OCI-LY7 (cell line): ENCODE measurements at regions of chr13 and their contacts with region 1.

Region 1: GRCh38 chr13:63540061-63540460 is 2124.4 kb upstream of the PCDH20 start:
- DNase-seq: no peak
- H3K4me3 ChIP-seq: no peak overlapping the region
- H3K27ac ChIP-seq: no peak overlapping the region
- H3K4me1 ChIP-seq: no peaks in the 10 kb centered on the region
- CTCF ChIP-seq: no peak

Region 2: GRCh38 chr13:63567031-63567430 is 27.0 kb after region 1 on chr13:
- CTCF ChIA-PET with region 1: no interaction called
- POLR2A ChIA-PET with region 1: no interaction called
- intact Hi-C with region 1: loop called (anchors 1 kb)
- DNase-seq: no peak
- H3K4me3 ChIP-seq: no peak overlapping the region
- H3K27ac ChIP-seq: no peak overlapping the region
- H3K4me1 ChIP-seq: no peaks in the 10 kb centered on the region
- CTCF ChIP-seq: no peak